ENCODE measurements at regions of chr9 and their contacts with region 1.

Region 1: DNA sequence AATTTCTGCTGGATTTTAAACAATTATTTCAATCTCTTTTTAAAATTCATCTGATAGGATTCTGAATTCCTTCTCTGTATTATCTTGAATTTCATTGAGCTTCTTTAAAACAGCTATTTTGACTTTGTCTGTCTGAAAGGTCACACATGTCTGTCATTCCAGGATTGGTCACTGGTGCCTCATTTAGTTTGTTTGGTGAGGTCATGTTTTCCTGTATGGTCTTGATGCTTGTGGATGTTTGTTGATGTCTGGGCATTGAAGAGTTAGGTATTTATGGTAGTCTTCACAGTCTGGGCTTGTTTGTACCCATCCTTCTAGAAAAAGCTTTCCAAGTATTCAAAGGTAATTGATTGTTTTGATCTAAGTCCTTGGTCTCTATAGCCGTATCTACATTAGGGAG is 39.1 kb downstream of the DENND4C start:
- DNase-seq: no peak
- ATAC-seq: no peak
- H3K4me3 ChIP-seq: no peak overlapping the region
- H3K27ac ChIP-seq: no peak overlapping the region
- H3K4me1 ChIP-seq: 0 out of 2 replicates have a peak, but pooled peaks cover 8% of the 10 kb centered on the region
- H3K27me3 ChIP-seq: no peaks in the 10 kb centered on the region
- CTCF ChIP-seq: no peak
- EP300 ChIP-seq: no peak
- POLR2A ChIP-seq: no peak
- RAD21 ChIP-seq: no peak

Region 2: GRCh38 chr9:19255821-19256220 is 13.8 kb before region 1 on chr9:
- CTCF ChIA-PET with region 1: no interaction called
- POLR2A ChIA-PET with region 1: no interaction called
- in situ Hi-C with region 1: no loop called
- intact Hi-C with region 1: loop called (anchors 2 kb)
- DNase-seq: no peak
- ATAC-seq: no peak
- H3K4me3 ChIP-seq: no peak overlapping the region
- H3K27ac ChIP-seq: no peak overlapping the region
- H3K4me1 ChIP-seq: peaks cover 15% of the 10 kb centered on the region
- H3K27me3 ChIP-seq: no peaks in the 10 kb centered on the region
- CTCF ChIP-seq: no peak
- EP300 ChIP-seq: no peak
- POLR2A ChIP-seq: no peak
- RAD21 ChIP-seq: no peak

Region 3: GRCh38 chr9:19298436-19299000 is 28.9 kb after region 1 on chr9:
- CTCF ChIA-PET with region 1: no interaction called
- POLR2A ChIA-PET with region 1: no interaction called
- in situ Hi-C with region 1: no loop called
- intact Hi-C with region 1: no loop called
- DNase-seq: no peak
- ATAC-seq: no peak
- H3K4me3 ChIP-seq: no peak overlapping the region
- H3K27ac ChIP-seq: no peak overlapping the region
- H3K4me1 ChIP-seq: no peaks in the 10 kb centered on the region
- H3K27me3 ChIP-seq: no peaks in the 10 kb centered on the region
- CTCF ChIP-seq: no peak
- EP300 ChIP-seq: no peak
- POLR2A ChIP-seq: no peak
- RAD21 ChIP-seq: no peak

Measured in HepG2 (cell line).